Activated CD4-positive, alpha-beta T cell treated with anti-CD3 and anti-CD28 coated beads for 36 hours (primary cell): ENCODE measurements at regions of chr14 and their contacts with region 1.

Region 1: GRCh38 chr14:90970167-90970600 is 90.3 kb downstream of the RPS6KA5 start:
- DNase-seq: no peak
- ATAC-seq: peak; percentile 91
- H3K4me3 Mint-ChIP-seq: peak overlapping the region; percentile 59
- H3K27ac Mint-ChIP-seq: peak overlapping the region; percentile 95
- H3K4me1 Mint-ChIP-seq: peaks cover 48% of the 10 kb centered on the region
- H3K27me3 Mint-ChIP-seq: no peaks in the 10 kb centered on the region

Region 2: GRCh38 chr14:90276646-90277367 is 693.4 kb before region 1 on chr14:
- CTCF ChIA-PET with region 1: no interaction called
- POLR2A ChIA-PET with region 1: no interaction called
- intact Hi-C with region 1: no loop called
- DNase-seq: peak; percentile 50
- ATAC-seq: peak; percentile 42
- H3K4me3 Mint-ChIP-seq: no peak overlapping the region
- H3K27ac Mint-ChIP-seq: peak overlapping the region; percentile 77
- H3K4me1 Mint-ChIP-seq: peaks cover 25% of the 10 kb centered on the region
- H3K27me3 Mint-ChIP-seq: no peaks in the 10 kb centered on the region

Region 3: GRCh38 chr14:90302529-90303303 is 667.5 kb before region 1 on chr14:
- CTCF ChIA-PET with region 1: no interaction called
- POLR2A ChIA-PET with region 1: no interaction called
- intact Hi-C with region 1: no loop called
- DNase-seq: no peak
- ATAC-seq: no peak
- H3K4me3 Mint-ChIP-seq: no peak overlapping the region
- H3K27ac Mint-ChIP-seq: peak overlapping the region; percentile 13
- H3K4me1 Mint-ChIP-seq: peaks cover 9% of the 10 kb centered on the region
- H3K27me3 Mint-ChIP-seq: no peaks in the 10 kb centered on the region

Region 4: GRCh38 chr14:90827916-90828610 is 142.1 kb before region 1 on chr14:
- CTCF ChIA-PET with region 1: no interaction called
- POLR2A ChIA-PET with region 1: no interaction called
- intact Hi-C with region 1: no loop called
- DNase-seq: peak; percentile 95
- ATAC-seq: peak; percentile 99
- H3K4me3 Mint-ChIP-seq: peak overlapping the region; percentile 68
- H3K27ac Mint-ChIP-seq: peak overlapping the region; percentile 88
- H3K4me1 Mint-ChIP-seq: peaks cover 20% of the 10 kb centered on the region
- H3K27me3 Mint-ChIP-seq: no peaks in the 10 kb centered on the region

Region 5: DNA sequence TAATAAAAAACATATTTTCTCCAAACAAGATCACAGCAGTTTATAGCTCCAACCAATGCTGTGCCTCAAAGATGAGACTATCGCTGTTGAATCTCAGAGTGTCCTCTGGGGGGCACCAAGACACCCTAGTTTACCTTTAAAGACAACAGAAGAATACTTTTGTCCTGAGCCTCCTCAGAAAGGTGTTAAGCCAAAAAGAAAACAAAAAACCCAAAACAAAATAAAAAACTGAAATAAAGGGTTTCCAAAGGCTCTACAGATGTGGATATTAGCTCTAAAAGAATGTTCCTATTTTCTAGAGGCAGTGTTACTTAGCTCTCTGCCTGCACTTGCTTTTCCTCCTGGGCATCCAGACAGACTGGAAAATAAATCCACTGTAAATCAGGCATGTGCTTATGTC is 67.1 kb before region 1 on chr14:
- CTCF ChIA-PET with region 1: interaction called, 9 read pairs
- POLR2A ChIA-PET with region 1: interaction called, 3 read pairs
- intact Hi-C with region 1: loop called (anchors 1 to 2 kb)
- DNase-seq: peak; percentile 77
- ATAC-seq: peak; percentile 86
- H3K4me3 Mint-ChIP-seq: no peak overlapping the region
- H3K27ac Mint-ChIP-seq: no peak overlapping the region
- H3K4me1 Mint-ChIP-seq: peaks cover 22% of the 10 kb centered on the region
- H3K27me3 Mint-ChIP-seq: no peaks in the 10 kb centered on the region

Region 6: GRCh38 chr14:90985601-90986242 is 15.5 kb after region 1 on chr14:
- CTCF ChIA-PET with region 1: interaction called, 4 read pairs
- POLR2A ChIA-PET with region 1: no interaction called
- intact Hi-C with region 1: loop called in 1 of 2 experiments (anchors 2 kb)
- DNase-seq: no peak
- ATAC-seq: no peak
- H3K4me3 Mint-ChIP-seq: no peak overlapping the region
- H3K27ac Mint-ChIP-seq: no peak overlapping the region
- H3K4me1 Mint-ChIP-seq: peaks cover 31% of the 10 kb centered on the region
- H3K27me3 Mint-ChIP-seq: no peaks in the 10 kb centered on the region

Region 7: GRCh38 chr14:91021991-91022621 is 51.9 kb after region 1 on chr14:
- CTCF ChIA-PET with region 1: no interaction called
- POLR2A ChIA-PET with region 1: no interaction called
- intact Hi-C with region 1: loop called (anchors 1 to 2 kb)
- DNase-seq: no peak
- ATAC-seq: peak; percentile 52
- H3K4me3 Mint-ChIP-seq: peak overlapping the region; percentile 53
- H3K27ac Mint-ChIP-seq: peak overlapping the region; percentile 81
- H3K4me1 Mint-ChIP-seq: peaks cover 36% of the 10 kb centered on the region
- H3K27me3 Mint-ChIP-seq: no peaks in the 10 kb centered on the region

Region 8: GRCh38 chr14:91114079-91115065 is 144.2 kb after region 1 on chr14:
- CTCF ChIA-PET with region 1: no interaction called
- POLR2A ChIA-PET with region 1: interaction called, 5 read pairs
- intact Hi-C with region 1: loop called in 1 of 2 experiments (anchors 1 kb)
- DNase-seq: peak; percentile 82
- ATAC-seq: peak; percentile 82
- H3K4me3 Mint-ChIP-seq: peak overlapping the region; percentile 99
- H3K27ac Mint-ChIP-seq: peak overlapping the region; percentile 99
- H3K4me1 Mint-ChIP-seq: peaks cover 70% of the 10 kb centered on the region
- H3K27me3 Mint-ChIP-seq: no peaks in the 10 kb centered on the region

Region 9: GRCh38 chr14:91244501-91244901 is 274.3 kb after region 1 on chr14 and contains the start of gene GPR68:
- CTCF ChIA-PET with region 1: no interaction called
- POLR2A ChIA-PET with region 1: interaction called, 4 read pairs
- intact Hi-C with region 1: loop called in 1 of 2 experiments (anchors 1 kb)
- DNase-seq: no peak
- ATAC-seq: no peak
- H3K4me3 Mint-ChIP-seq: peak within 1 kb of the TSS; percentile 74
- H3K27ac Mint-ChIP-seq: peak within 1 kb of the TSS; percentile 89
- H3K4me1 Mint-ChIP-seq: peaks cover 95% of the 10 kb centered on the region
- H3K27me3 Mint-ChIP-seq: no peaks in the 10 kb centered on the region
- total RNA-seq, gene GPR68: 9.4 to 11.2 TPM